Calu3 (cell line): ENCODE measurements at regions of chr6 and their contacts with region 1.

Region 1: GRCh38 chr6:112337209-112337638 is 9.9 kb upstream of the RFPL4B start:
- DNase-seq: peak; percentile 51
- H3K4me3 Mint-ChIP-seq: no peak overlapping the region
- H3K27ac Mint-ChIP-seq: no peak overlapping the region
- H3K4me1 Mint-ChIP-seq: no peaks in the 10 kb centered on the region
- H3K27me3 Mint-ChIP-seq: no peaks in the 10 kb centered on the region
- CTCF ChIP-seq: peak; percentile 44

Region 2: DNA sequence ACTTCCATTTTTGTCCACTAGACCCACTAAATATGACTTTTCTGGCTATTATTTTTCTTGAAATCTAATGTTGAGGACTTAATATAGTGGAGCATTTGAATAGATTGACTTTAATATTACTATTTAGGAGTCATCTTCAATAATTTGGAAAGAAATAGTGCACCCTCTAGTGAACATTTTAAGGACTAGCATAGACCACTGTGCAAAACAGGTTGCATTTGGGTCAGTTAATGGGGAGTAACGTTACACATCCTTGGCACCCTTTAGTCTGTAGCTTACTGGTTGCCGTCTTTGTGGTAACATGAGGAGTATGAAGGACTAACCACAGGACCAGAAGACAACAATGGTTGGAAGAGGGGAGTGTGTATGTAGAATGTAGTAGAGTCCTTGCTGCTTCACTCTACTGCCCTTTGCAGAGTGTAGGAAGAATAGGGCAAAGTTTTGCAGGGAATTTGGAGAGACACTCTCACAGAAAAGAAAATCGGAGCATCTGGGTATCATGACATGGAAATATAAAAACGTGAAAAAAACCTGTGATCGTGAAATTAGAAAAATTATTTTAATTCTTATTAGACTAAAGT is 35.1 kb after region 1 on chr6:
- CTCF ChIA-PET with region 1: no interaction called
- intact Hi-C with region 1: loop called (anchors 1 kb)
- DNase-seq: no peak
- H3K4me3 Mint-ChIP-seq: no peak overlapping the region
- H3K27ac Mint-ChIP-seq: no peak overlapping the region
- H3K4me1 Mint-ChIP-seq: peaks cover 8% of the 10 kb centered on the region
- H3K27me3 Mint-ChIP-seq: peaks cover 40% of the 10 kb centered on the region
- CTCF ChIP-seq: no peak

Region 3: GRCh38 chr6:112563368-112563767 is 226.1 kb after region 1 on chr6:
- CTCF ChIA-PET with region 1: no interaction called
- intact Hi-C with region 1: loop called (anchors 10 kb)
- DNase-seq: no peak
- H3K4me3 Mint-ChIP-seq: no peak overlapping the region
- H3K27ac Mint-ChIP-seq: no peak overlapping the region
- H3K4me1 Mint-ChIP-seq: peaks cover 28% of the 10 kb centered on the region
- H3K27me3 Mint-ChIP-seq: no peaks in the 10 kb centered on the region
- CTCF ChIP-seq: no peak

Region 4: GRCh38 chr6:113936093-113936934 is 1599.1 kb after region 1 on chr6:
- CTCF ChIA-PET with region 1: no interaction called
- intact Hi-C with region 1: loop called (anchors 5 kb)
- DNase-seq: peak; percentile 29
- H3K4me3 Mint-ChIP-seq: no peak overlapping the region
- H3K27ac Mint-ChIP-seq: no peak overlapping the region
- H3K4me1 Mint-ChIP-seq: no peaks in the 10 kb centered on the region
- H3K27me3 Mint-ChIP-seq: no peaks in the 10 kb centered on the region
- CTCF ChIP-seq: peak; percentile 40